Activated CD4-positive, alpha-beta T cell treated with anti-CD3 and anti-CD28 coated beads for 36 hours (primary cell): ENCODE measurements at regions of chr3 and their contacts with region 1.

Region 1: GRCh38 chr3:47781685-47782445 is at the start of gene SMARCC1:
- DNase-seq: peak; percentile 99
- ATAC-seq: peak; percentile 93
- H3K4me3 Mint-ChIP-seq: peak within 1 kb of the TSS; percentile 99
- H3K27ac Mint-ChIP-seq: peak within 1 kb of the TSS; percentile 97
- H3K4me1 Mint-ChIP-seq: peaks cover 21% of the 10 kb centered on the region
- H3K27me3 Mint-ChIP-seq: no peaks in the 10 kb centered on the region
- total RNA-seq, gene SMARCC1: 129 to 130 TPM

Region 2: DNA sequence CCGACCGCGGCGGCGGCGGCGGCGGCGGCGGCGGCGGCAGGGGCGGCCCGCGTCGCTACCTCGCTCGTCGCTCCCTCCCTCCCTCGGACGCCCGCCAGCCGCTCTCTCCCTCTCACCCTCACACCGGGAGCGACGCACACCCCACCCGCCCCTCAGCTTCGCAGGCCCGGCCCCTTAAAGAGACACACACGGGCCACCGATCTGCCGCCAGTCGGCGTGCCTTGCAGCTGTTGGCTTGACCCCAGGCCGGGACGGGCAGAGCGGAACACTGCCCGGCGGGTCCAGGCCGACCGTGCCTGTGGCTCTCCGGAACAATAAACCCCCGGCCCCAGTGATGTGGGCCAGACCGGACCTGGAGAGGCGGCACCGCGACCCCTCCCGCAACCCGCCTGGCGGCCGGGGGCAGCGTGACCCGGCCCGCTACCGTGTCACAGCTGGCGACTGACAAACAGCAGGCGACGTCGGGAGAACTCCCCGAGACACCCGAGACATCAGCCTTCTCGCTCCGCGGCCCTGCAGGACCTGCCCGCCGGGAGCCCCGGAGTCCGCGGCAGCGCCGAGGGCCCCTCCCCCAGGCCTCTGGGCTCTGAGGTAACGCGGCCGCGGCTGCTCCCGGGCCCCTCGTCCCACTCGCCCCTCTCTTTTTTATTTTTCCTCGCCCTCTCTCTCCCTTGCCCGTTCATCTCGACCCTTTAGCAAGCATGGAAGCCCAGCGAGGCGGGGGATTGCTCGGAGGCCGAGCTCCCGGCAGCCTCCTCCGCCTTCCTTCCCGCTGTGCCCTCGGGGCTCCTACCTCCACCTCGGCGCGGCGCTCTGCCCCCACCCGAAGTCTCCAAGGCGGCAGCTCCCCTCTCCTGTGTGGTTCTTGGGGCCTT is 617.6 kb before region 1 on chr3 and contains the start of gene SETD2:
- CTCF ChIA-PET with region 1: no interaction called
- POLR2A ChIA-PET with region 1: no interaction called
- intact Hi-C with region 1: loop called in 1 of 2 experiments (anchors 1 kb)
- DNase-seq: peak; percentile 94
- ATAC-seq: peak; percentile 86
- H3K4me3 Mint-ChIP-seq: peak within 1 kb of the TSS; percentile 97
- H3K27ac Mint-ChIP-seq: peak within 1 kb of the TSS; percentile 99
- H3K4me1 Mint-ChIP-seq: peaks cover 40% of the 10 kb centered on the region
- H3K27me3 Mint-ChIP-seq: no peaks in the 10 kb centered on the region
- total RNA-seq, gene SETD2: 31.8 to 35.8 TPM

Region 3: DNA sequence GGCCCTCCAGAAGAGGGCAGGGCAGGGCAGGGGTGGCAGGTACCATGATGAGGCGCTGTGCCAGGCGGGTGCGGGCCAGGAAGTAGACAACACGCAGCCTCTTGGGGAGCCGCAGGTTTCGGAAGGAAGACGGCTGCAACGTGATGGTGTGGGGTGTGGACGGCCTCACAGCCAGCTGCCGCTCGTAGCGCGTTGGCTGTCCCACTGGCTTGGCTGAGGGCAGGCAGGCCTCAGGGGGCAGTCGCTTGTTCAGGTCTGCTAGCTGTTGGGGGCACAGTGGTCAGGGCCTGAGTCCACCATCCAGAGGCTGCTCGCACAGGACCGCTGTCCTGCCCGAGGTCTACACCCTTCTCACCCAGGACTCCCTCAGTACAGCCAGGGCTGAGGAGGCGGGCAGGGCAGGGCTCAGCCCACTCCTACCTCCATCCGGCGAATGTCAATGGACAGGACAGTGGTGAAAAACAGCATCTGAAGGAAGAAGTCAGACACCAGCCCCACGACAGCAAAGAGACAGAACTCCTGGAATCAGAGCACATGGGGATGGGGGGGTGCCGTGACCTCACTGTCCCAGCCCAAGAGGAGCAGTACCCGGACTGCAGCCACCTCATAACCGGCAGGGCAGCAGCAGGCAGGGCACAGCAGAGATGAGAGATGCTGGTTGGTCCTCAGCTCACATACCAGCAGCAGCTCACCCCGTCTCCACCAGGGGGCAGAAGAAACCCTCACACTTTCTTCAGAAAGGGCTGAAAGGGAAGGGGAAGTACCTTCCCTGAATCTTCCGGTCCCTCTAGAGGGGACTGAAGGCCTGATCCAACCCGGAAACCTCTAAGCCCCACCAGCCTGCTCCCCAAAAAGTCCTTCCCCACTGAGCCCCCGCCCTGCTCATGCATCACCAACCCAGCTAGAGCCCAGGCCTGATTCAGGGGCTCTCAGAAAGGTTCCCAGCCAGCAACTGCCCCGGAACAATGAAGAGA is 361.1 kb before region 1 on chr3:
- CTCF ChIA-PET with region 1: no interaction called
- POLR2A ChIA-PET with region 1: no interaction called
- intact Hi-C with region 1: loop called in 1 of 2 experiments (anchors 5 kb)
- DNase-seq: peak; percentile 95
- ATAC-seq: peak; percentile 97
- H3K4me3 Mint-ChIP-seq: peak overlapping the region; percentile 17
- H3K27ac Mint-ChIP-seq: peak overlapping the region; percentile 99
- H3K4me1 Mint-ChIP-seq: peaks cover 10% of the 10 kb centered on the region
- H3K27me3 Mint-ChIP-seq: no peaks in the 10 kb centered on the region

Region 4: GRCh38 chr3:47482366-47482765 is 299.5 kb before region 1 on chr3:
- CTCF ChIA-PET with region 1: no interaction called
- POLR2A ChIA-PET with region 1: no interaction called
- intact Hi-C with region 1: no loop called
- DNase-seq: no peak
- ATAC-seq: no peak
- H3K4me3 Mint-ChIP-seq: no peak overlapping the region
- H3K27ac Mint-ChIP-seq: no peak overlapping the region
- H3K4me1 Mint-ChIP-seq: no peaks in the 10 kb centered on the region
- H3K27me3 Mint-ChIP-seq: no peaks in the 10 kb centered on the region

Region 5: GRCh38 chr3:47522082-47522987 is 259.5 kb before region 1 on chr3:
- CTCF ChIA-PET with region 1: no interaction called
- POLR2A ChIA-PET with region 1: no interaction called
- intact Hi-C with region 1: loop called in 1 of 2 experiments (anchors 2 kb)
- DNase-seq: peak; percentile 90
- ATAC-seq: peak; percentile 93
- H3K4me3 Mint-ChIP-seq: no peak overlapping the region
- H3K27ac Mint-ChIP-seq: peak overlapping the region; percentile 32
- H3K4me1 Mint-ChIP-seq: peaks cover 5% of the 10 kb centered on the region
- H3K27me3 Mint-ChIP-seq: no peaks in the 10 kb centered on the region

Region 6: DNA sequence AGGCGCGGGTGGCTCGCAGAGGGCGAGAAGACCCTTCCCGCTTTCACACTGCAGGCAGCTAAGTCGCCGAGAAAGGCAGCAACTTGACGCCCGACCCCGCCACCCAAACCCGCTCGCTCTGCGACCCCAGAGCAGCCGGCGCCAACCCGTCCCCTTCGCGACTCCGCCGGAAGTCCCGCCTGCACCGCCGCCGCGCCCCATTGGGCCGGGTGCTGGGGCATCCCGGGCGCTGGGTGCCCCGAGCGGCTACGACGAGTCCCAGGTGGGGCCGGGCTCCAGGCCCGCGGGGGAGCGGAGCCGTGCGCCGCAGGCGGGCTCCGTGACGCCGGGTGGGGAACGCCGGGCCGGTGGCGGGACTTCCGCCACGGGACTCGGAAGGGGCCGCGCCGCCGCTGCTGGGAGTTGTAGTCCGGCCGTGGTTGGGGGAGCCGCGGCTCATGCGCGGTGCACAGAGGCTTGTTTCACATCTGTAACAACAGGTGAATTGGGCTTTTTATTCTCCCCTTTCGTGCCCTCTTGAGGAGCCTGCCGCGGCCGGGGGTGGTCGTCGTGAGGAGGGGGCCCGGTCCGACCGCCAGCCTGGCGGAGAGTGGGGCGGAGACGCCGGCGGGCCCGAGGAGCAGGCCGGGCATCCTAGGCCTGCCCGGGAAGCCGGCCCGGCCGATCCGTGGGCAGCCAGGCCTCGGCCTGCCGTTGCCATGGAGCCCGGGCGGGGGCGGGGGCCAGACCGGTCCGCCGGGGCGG is 21.0 kb after region 1 on chr3 and contains the start of gene DHX30:
- CTCF ChIA-PET with region 1: interaction called, 4 read pairs
- POLR2A ChIA-PET with region 1: interaction called, 5 read pairs
- intact Hi-C with region 1: loop called (anchors 1 to 2 kb)
- DNase-seq: peak; percentile 93
- ATAC-seq: peak; percentile 92
- H3K4me3 Mint-ChIP-seq: peak within 1 kb of the TSS; percentile 96
- H3K27ac Mint-ChIP-seq: peak within 1 kb of the TSS; percentile 98
- H3K4me1 Mint-ChIP-seq: peaks cover 24% of the 10 kb centered on the region
- H3K27me3 Mint-ChIP-seq: no peaks in the 10 kb centered on the region
- total RNA-seq, gene DHX30: 81.6 to 82.3 TPM

Region 7: GRCh38 chr3:48240711-48241491 is 459.0 kb after region 1 on chr3 and contains the start of gene ZNF589:
- CTCF ChIA-PET with region 1: no interaction called
- POLR2A ChIA-PET with region 1: no interaction called
- intact Hi-C with region 1: loop called in 1 of 2 experiments (anchors 2 kb)
- DNase-seq: peak; percentile 97
- ATAC-seq: peak; percentile 99
- H3K4me3 Mint-ChIP-seq: peak within 1 kb of the TSS; percentile 87
- H3K27ac Mint-ChIP-seq: peak within 1 kb of the TSS; percentile 84
- H3K4me1 Mint-ChIP-seq: peaks cover 26% of the 10 kb centered on the region
- H3K27me3 Mint-ChIP-seq: no peaks in the 10 kb centered on the region
- total RNA-seq, gene ZNF589: 28.6 to 29.6 TPM